Heart left ventricle (tissue), 16 donors: ENCODE measurements at regions of chr19 and their contacts with region 1.

Region 1: GRCh38 chr19:10403137-10404021 is at the start of gene CDC37:
- DNase-seq: peak; percentile 96 to 98 (median 97)
- ATAC-seq: peak; percentile 92 to 94 (median 93)
- H3K4me3 ChIP-seq: peak within 1 kb of the TSS; percentile 58 to 98 (median 92)
- H3K27ac ChIP-seq: peak within 1 kb of the TSS; percentile 68 to 95 (median 86)
- H3K4me1 ChIP-seq: peaks cover 12 to 83% (median 51%) of the 10 kb centered on the region in 12 donors
- H3K27me3 ChIP-seq: peaks cover 4 to 27% (median 11%) of the 10 kb centered on the region in 9 donors
- CTCF ChIP-seq: no peak
- POLR2A ChIP-seq: peak in 1 of 2 donors; percentile 89
- total RNA-seq, gene CDC37: 108 to 189 (median 138) TPM

Region 2: DNA sequence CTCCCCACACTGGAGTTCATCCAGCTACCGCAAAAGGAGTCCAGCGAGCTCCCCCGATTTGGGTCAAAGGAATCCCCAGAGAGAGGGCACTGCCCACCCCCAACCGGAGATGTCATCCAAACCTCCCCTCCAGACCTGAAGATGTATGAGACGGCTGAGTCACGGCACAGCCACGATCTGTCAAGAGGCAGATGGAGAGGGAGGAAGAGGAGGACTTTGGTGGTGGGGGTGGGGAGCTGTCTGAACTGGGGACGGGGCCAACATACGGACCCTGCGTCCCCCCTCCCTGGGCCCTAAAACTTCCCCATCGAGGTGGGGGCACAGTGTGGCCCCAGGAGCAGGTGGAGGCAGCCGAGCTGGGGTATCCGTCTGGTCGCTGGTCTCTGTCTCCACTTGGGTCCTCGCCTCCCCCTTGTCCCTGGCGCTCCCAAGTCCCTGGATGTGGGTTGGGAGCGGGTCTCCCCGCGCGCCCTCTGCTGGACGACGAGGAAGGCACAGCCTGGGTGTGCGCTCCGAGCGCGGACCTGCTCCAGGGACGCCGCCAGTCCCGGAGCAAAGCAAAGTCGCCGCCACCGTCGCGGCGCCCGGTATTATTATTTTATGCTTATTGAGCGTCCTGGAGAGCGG is 20.7 kb after region 1 on chr19:
- intact Hi-C with region 1: loop called in 7 of 10 experiments (anchors 1 to 2 kb)
- DNase-seq: peak; percentile 78 to 91 (median 83)
- ATAC-seq: peak; percentile 76 to 93 (median 89)
- H3K4me3 ChIP-seq: peak overlapping the region in 10 of 12 donors; percentile 8 to 57 (median 39)
- H3K27ac ChIP-seq: peak overlapping the region in 2 of 12 donors; percentile 21 to 74
- H3K4me1 ChIP-seq: peaks cover 0 to 83% (median 24%) of the 10 kb centered on the region in 12 donors
- H3K27me3 ChIP-seq: peaks cover 31 to 64% (median 50%) of the 10 kb centered on the region in 9 donors
- CTCF ChIP-seq: peak; percentile 89 to 95 (median 94)
- POLR2A ChIP-seq: no peak

Region 3: DNA sequence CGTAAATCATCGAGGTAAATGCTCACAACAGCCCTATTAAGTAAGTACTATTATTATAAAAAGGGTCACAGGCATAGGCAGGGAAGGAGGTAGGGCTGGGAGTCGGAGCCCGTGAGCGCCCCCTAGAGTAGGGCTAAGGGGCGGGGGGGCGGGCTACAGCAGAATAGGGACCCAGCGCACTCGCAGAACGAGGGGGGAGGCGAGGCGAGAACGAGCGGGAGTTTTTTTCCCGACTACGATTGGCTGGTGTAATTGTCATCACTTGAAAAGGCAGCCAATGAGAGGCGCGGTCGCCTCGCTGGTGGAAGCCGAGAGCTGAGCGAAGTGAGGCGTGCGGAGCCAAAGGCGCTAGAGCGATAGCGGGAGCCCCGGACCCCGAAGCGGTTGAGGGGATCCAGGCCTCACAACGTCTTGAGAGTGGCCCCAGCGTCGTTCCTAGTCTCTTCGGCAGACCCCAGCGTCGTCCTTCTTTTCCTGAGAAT is 75.6 kb after region 1 on chr19:
- intact Hi-C with region 1: loop called in 1 of 10 experiments (anchors 10 kb)
- DNase-seq: peak; percentile 92 to 94 (median 94)
- ATAC-seq: peak; percentile 93 to 98 (median 98)
- H3K4me3 ChIP-seq: peak overlapping the region in 11 of 12 donors; percentile 33 to 64 (median 53)
- H3K27ac ChIP-seq: peak overlapping the region in 6 of 12 donors; percentile 11 to 47 (median 40)
- H3K4me1 ChIP-seq: peaks cover 0 to 19% (median 8%) of the 10 kb centered on the region in 12 donors
- H3K27me3 ChIP-seq: no peaks in the 10 kb centered on the region
- CTCF ChIP-seq: peak; percentile 78 to 91 (median 88)
- POLR2A ChIP-seq: peak in 1 of 2 donors; percentile 44

Region 4: GRCh38 chr19:10575011-10575716 is 171.8 kb after region 1 on chr19:
- intact Hi-C with region 1: loop called in 1 of 10 experiments (anchors 10 kb)
- DNase-seq: no peak
- ATAC-seq: no peak
- H3K4me3 ChIP-seq: no peak overlapping the region
- H3K27ac ChIP-seq: no peak overlapping the region
- H3K4me1 ChIP-seq: peaks cover 0 to 9% (median 0%) of the 10 kb centered on the region in 12 donors
- H3K27me3 ChIP-seq: no peaks in the 10 kb centered on the region
- CTCF ChIP-seq: no peak
- POLR2A ChIP-seq: no peak